ENCODE measurements at regions of chr10 and their contacts with region 1.

Region 1: DNA sequence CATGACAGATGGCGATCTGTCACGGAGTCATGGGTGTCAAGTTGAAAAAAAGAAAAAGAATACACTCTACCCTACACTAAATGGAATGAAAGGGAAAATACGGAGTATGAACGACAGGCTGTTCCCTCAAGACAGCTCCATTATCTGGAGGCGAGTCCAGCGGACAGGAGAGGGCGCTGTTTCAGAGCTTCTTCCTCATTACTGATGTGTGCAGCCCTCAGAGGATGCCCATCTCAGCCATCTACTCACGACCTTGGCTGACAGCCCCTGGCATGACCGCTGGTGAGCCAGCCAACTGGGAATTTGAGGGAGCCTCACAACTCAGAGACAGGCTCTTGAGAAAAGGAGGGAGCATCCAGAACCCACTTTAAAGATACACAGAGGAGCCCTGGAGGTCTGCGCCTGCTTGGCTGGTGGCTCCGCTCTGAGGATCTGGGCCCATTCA is 49.6 kb upstream of the SMNDC1 start:
- DNase-seq: peak; percentile 98
- H3K4me3 Mint-ChIP-seq: peak overlapping the region; percentile 74
- H3K27ac Mint-ChIP-seq: peak overlapping the region; percentile 99
- H3K4me1 Mint-ChIP-seq: peaks cover 60% of the 10 kb centered on the region
- H3K27me3 Mint-ChIP-seq: no peaks in the 10 kb centered on the region

Region 2: GRCh38 chr10:110311357-110311949 is 42.9 kb before region 1 on chr10:
- CTCF ChIA-PET with region 1: interaction called, 21 read pairs
- intact Hi-C with region 1: loop called (anchors 1 kb)
- DNase-seq: peak; percentile 61
- H3K4me3 Mint-ChIP-seq: no peak overlapping the region
- H3K27ac Mint-ChIP-seq: no peak overlapping the region
- H3K4me1 Mint-ChIP-seq: peaks cover 28% of the 10 kb centered on the region
- H3K27me3 Mint-ChIP-seq: no peaks in the 10 kb centered on the region

Region 3: GRCh38 chr10:110387983-110388687 is 33.8 kb after region 1 on chr10:
- CTCF ChIA-PET with region 1: interaction called, 3 read pairs
- intact Hi-C with region 1: loop called (anchors 1 kb)
- DNase-seq: peak; percentile 54
- H3K4me3 Mint-ChIP-seq: no peak overlapping the region
- H3K27ac Mint-ChIP-seq: peak overlapping the region; percentile 84
- H3K4me1 Mint-ChIP-seq: peaks cover 28% of the 10 kb centered on the region
- H3K27me3 Mint-ChIP-seq: no peaks in the 10 kb centered on the region

Region 4: DNA sequence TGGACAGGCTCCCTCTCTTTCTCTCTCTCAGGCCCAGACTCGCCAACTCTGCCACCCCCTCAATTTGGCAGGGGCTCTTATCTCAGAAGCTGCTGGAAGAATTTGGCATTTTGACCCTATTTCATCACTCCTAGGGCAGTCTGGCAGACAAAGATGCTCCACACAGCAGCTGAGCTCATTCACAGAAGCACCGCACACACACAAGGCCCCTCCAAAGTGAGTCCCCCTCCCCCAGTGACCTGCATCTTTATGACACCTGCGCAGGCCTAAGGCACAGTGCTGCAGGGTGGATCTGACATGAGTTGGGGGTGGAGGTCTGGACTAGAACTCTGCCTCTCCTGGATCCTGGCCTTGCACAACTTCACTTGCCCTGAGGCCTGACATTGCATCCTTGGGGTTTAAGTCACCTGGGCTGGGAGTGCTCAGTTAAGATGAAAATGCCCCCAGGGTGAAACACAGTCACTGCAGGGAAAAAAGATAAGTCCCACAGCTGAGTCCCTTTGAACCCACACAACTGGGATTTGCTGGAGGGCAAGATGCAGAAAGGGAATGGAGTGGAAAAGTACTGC is 102.3 kb after region 1 on chr10:
- CTCF ChIA-PET with region 1: interaction called, 12 read pairs
- intact Hi-C with region 1: no loop called
- DNase-seq: no peak
- H3K4me3 Mint-ChIP-seq: no peak overlapping the region
- H3K27ac Mint-ChIP-seq: no peak overlapping the region
- H3K4me1 Mint-ChIP-seq: peaks cover 37% of the 10 kb centered on the region
- H3K27me3 Mint-ChIP-seq: no peaks in the 10 kb centered on the region

Region 5: GRCh38 chr10:110530131-110530831 is 175.9 kb after region 1 on chr10:
- CTCF ChIA-PET with region 1: interaction called, 17 read pairs
- intact Hi-C with region 1: loop called (anchors 1 kb)
- DNase-seq: peak; percentile 52
- H3K4me3 Mint-ChIP-seq: no peak overlapping the region
- H3K27ac Mint-ChIP-seq: no peak overlapping the region
- H3K4me1 Mint-ChIP-seq: peaks cover 52% of the 10 kb centered on the region
- H3K27me3 Mint-ChIP-seq: no peaks in the 10 kb centered on the region

Region 6: GRCh38 chr10:110610308-110610774 is 256.0 kb after region 1 on chr10:
- CTCF ChIA-PET with region 1: no interaction called
- intact Hi-C with region 1: no loop called
- DNase-seq: peak; percentile 75
- H3K4me3 Mint-ChIP-seq: no peak overlapping the region
- H3K27ac Mint-ChIP-seq: no peak overlapping the region
- H3K4me1 Mint-ChIP-seq: peaks cover 26% of the 10 kb centered on the region
- H3K27me3 Mint-ChIP-seq: no peaks in the 10 kb centered on the region